Calu3 (cell line): ENCODE measurements at regions of chr3 and their contacts with region 1.

Region 1: GRCh38 chr3:53478166-53478830 is 16.1 kb upstream of the CACNA1D start:
- DNase-seq: peak; percentile 69
- H3K4me3 Mint-ChIP-seq: no peak overlapping the region
- H3K27ac Mint-ChIP-seq: peak overlapping the region; percentile 93
- H3K4me1 Mint-ChIP-seq: peaks cover 38% of the 10 kb centered on the region
- H3K27me3 Mint-ChIP-seq: no peaks in the 10 kb centered on the region
- CTCF ChIP-seq: no peak

Region 2: DNA sequence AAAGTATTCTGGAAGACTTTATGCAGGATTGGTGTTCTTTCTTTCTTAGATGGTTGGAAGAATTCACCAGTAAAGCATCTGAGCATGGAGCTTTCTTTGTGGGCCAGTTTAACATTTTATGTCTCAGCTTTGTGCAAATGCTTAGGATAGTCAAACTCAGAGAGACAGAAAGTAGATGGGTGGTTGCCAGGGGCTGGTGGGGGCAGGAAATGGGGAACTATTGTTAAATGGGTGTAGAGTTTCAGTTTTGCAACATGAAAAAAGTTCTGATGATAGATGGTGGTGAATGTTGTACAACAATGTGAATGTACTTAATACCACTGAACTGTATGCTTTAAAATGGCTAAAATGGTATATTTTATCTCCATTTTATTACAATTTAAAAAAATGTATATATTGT is 747.6 kb before region 1 on chr3:
- CTCF ChIA-PET with region 1: no interaction called
- intact Hi-C with region 1: no loop called
- DNase-seq: no peak
- H3K4me3 Mint-ChIP-seq: no peak overlapping the region
- H3K27ac Mint-ChIP-seq: no peak overlapping the region
- H3K4me1 Mint-ChIP-seq: peaks cover 6% of the 10 kb centered on the region
- H3K27me3 Mint-ChIP-seq: no peaks in the 10 kb centered on the region
- CTCF ChIP-seq: no peak

Region 3: DNA sequence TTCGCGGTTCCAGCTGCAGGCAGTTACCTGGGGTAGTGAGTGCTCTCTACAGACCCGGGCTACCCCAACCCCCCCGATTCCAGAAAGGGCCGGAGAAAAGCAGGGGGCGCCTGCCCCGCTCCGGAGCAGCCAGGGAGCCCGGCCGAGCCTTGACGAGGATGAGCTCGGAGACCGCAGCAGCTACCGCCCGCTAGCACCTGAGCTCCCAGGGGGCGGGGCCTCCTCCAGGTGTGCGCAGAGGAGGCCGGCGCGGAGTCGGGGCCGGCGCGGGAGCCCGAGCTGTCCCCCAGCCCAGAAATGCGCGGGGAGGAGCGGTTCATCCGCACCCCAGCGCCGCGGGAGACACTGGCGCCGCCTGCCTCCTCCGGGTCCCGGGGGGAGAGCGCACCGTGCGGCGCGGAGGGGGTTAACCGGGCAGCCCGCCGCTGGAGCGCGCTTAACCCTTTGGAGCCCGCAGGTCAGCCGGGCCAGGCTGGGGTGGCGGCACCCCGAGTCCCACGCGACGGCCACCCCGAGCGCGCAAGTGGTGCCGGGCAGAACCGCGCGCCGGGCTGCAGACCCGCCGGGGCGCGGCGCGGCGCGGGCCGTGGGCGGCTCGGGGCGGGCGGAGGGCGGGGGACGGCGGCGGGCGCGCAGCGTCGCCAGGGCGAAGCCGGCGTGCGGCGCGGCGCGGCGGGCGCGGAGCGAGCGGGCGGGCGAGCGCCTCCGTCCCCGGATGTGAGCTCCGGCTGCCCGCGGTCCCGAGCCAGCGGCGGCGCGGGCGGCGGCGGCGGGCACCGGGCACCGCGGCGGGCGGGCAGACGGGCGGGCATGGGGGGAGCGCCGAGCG is 15.9 kb after region 1 on chr3 and contains the start of gene CACNA1D:
- CTCF ChIA-PET with region 1: interaction called, 14 read pairs
- intact Hi-C with region 1: no loop called
- DNase-seq: peak; percentile 89
- H3K4me3 Mint-ChIP-seq: peak within 1 kb of the TSS; percentile 71
- H3K27ac Mint-ChIP-seq: peak within 1 kb of the TSS; percentile 30
- H3K4me1 Mint-ChIP-seq: peaks cover 27% of the 10 kb centered on the region
- H3K27me3 Mint-ChIP-seq: no peaks in the 10 kb centered on the region
- CTCF ChIP-seq: no peak
- total RNA-seq, gene CACNA1D: 36.3 and 48.3 TPM in 2 replicates

Region 4: GRCh38 chr3:53506110-53506762 is 27.9 kb after region 1 on chr3:
- CTCF ChIA-PET with region 1: no interaction called
- intact Hi-C with region 1: loop called (anchors 2 kb)
- DNase-seq: peak; percentile 23
- H3K4me3 Mint-ChIP-seq: peak overlapping the region; percentile 50
- H3K27ac Mint-ChIP-seq: peak overlapping the region; percentile 99
- H3K4me1 Mint-ChIP-seq: peaks cover 35% of the 10 kb centered on the region
- H3K27me3 Mint-ChIP-seq: no peaks in the 10 kb centered on the region
- CTCF ChIP-seq: no peak